B cell (primary cell): ENCODE measurements at regions of chr13 and their contacts with region 1.

Region 1: GRCh38 chr13:41061075-41061913 is at the start of gene WBP4:
- DNase-seq: peak; percentile 97
- ATAC-seq: peak; percentile 70
- H3K4me3 ChIP-seq: peak within 1 kb of the TSS; percentile 83 to 99 (median 98)
- H3K4me3 Mint-ChIP-seq: peak within 1 kb of the TSS; percentile 100
- H3K27ac ChIP-seq: peak within 1 kb of the TSS; percentile 86 to 91
- H3K27ac Mint-ChIP-seq: peak within 1 kb of the TSS; percentile 100
- H3K4me1 ChIP-seq: peaks cover 12 to 14% of the 10 kb centered on the region in 2 donors
- H3K4me1 Mint-ChIP-seq: peaks cover 39% of the 10 kb centered on the region
- H3K27me3 ChIP-seq: no peaks in the 10 kb centered on the region
- H3K27me3 Mint-ChIP-seq: no peaks in the 10 kb centered on the region
- CTCF ChIP-seq: no peak
- total RNA-seq, gene WBP4: 10.4 and 10.6 TPM in 2 replicates

Region 2: DNA sequence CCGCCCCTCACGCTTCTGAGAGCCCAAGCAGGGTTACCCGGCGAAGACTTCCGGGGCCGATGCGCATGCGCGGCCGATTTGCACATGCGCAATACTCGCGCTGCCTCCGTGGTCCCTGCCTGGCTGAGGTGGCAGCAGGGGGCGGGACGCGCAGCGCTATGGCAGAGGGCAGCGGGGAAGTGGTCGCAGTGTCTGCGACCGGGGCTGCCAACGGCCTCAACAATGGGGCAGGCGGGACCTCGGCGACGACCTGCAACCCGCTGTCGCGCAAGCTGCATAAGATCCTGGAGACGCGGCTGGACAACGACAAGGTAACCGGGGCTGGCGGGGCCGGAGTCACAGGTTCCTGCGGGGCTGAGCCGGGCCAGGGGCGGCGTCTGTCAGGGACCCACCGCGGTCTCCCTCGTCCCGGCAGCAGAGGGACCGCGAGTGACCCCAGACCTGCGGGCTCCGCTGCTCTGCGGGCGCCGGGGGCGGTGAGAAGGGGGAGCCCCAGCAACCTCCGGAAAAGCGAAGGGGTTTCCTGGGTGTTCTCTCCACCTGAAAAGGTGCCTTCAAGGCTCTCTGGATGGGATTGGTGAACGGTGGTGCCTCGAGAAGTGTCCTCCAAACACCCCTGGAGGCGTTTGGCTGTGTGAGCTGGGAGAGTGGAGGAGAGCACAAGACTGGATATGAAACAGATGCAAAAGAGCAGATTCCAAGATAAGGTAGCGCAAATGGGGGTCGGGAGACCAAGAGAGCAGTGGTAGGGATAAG is 1405.5 kb before region 1 on chr13 and contains the start of gene COG6:
- CTCF ChIA-PET with region 1: no interaction called
- POLR2A ChIA-PET with region 1: interaction called, 10 read pairs
- intact Hi-C with region 1: no loop called
- DNase-seq: peak; percentile 96
- ATAC-seq: peak; percentile 90
- H3K4me3 ChIP-seq: peak within 1 kb of the TSS; percentile 59 to 93 (median 89)
- H3K4me3 Mint-ChIP-seq: peak within 1 kb of the TSS; percentile 100
- H3K27ac ChIP-seq: peak within 1 kb of the TSS; percentile 35 to 57
- H3K27ac Mint-ChIP-seq: peak within 1 kb of the TSS; percentile 96
- H3K4me1 ChIP-seq: peaks cover 10% of the 10 kb centered on the region in 2 donors
- H3K4me1 Mint-ChIP-seq: peaks cover 32% of the 10 kb centered on the region
- H3K27me3 ChIP-seq: no peaks in the 10 kb centered on the region
- H3K27me3 Mint-ChIP-seq: peaks cover 3% of the 10 kb centered on the region
- CTCF ChIP-seq: no peak
- total RNA-seq, gene COG6: 49.9 and 55.1 TPM in 2 replicates

Region 3: GRCh38 chr13:40933508-40934204 is 127.6 kb before region 1 on chr13:
- CTCF ChIA-PET with region 1: no interaction called
- POLR2A ChIA-PET with region 1: no interaction called
- intact Hi-C with region 1: no loop called
- DNase-seq: peak; percentile 75
- ATAC-seq: peak; percentile 92
- H3K4me3 ChIP-seq: peak overlapping the region in 1 of 5 experiments; percentile 4
- H3K4me3 Mint-ChIP-seq: peak overlapping the region; percentile 48
- H3K27ac ChIP-seq: peak overlapping the region; percentile 43 to 79
- H3K27ac Mint-ChIP-seq: peak overlapping the region; percentile 74
- H3K4me1 ChIP-seq: peaks cover 22 to 23% of the 10 kb centered on the region in 2 donors
- H3K4me1 Mint-ChIP-seq: peaks cover 43% of the 10 kb centered on the region
- H3K27me3 ChIP-seq: no peaks in the 10 kb centered on the region
- H3K27me3 Mint-ChIP-seq: no peaks in the 10 kb centered on the region
- CTCF ChIP-seq: no peak

Region 4: DNA sequence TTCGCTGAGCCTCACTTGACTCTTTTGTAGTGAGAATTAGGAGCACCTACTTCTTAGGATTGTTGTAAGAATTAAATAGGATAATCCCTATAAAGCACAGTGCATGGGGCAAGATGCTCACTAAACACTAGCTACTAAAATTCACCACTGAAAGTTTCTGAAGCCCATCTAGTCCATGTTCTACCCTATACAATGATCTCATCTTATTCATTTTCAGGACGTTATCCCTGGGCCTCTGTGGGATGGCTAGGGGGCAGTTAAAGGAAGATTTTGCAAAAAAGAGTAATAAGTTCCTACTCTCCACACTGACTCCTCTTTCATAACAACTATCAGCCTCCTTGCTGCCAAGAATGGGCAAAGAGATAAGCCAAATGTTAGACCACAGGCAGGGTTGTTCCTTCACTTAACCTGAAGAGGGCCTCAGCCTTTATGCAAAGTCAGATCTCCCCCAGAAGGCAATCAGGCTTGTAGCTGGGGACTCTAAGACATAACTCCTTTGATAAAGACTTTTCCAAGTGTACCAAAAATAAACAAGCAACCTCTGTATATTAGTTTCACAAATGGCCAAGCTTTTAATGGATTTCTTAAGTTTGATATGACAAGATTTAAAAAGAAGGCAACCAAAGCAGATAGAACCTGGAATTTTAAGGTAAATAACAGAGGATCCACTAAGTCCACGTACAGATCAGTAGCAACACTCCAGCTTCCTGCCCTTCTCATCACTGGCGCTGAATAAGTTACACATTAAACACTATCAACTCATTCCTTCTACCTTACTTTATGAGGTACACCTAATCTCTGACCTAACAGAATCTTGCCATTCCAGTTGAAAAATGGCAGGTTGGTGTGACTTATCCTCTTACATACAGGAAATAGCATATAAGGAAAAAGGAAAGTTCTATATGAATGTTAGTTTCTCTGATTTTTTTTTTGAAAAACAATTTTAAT is 86.6 kb before region 1 on chr13:
- CTCF ChIA-PET with region 1: interaction called, 44 read pairs
- POLR2A ChIA-PET with region 1: interaction called, 5 read pairs
- intact Hi-C with region 1: loop called (anchors 2 kb)
- DNase-seq: peak; percentile 71
- ATAC-seq: peak; percentile 87
- H3K4me3 ChIP-seq: peak overlapping the region in 1 of 5 experiments; percentile 30
- H3K4me3 Mint-ChIP-seq: peak overlapping the region; percentile 51
- H3K27ac ChIP-seq: peak overlapping the region in 1 of 2 donors; percentile 54
- H3K27ac Mint-ChIP-seq: peak overlapping the region; percentile 57
- H3K4me1 ChIP-seq: peaks cover 70 to 92% of the 10 kb centered on the region in 2 donors
- H3K4me1 Mint-ChIP-seq: peaks cover 90% of the 10 kb centered on the region
- H3K27me3 ChIP-seq: no peaks in the 10 kb centered on the region
- H3K27me3 Mint-ChIP-seq: no peaks in the 10 kb centered on the region
- CTCF ChIP-seq: peak; percentile 72

Region 5: GRCh38 chr13:41075034-41075433 is 13.7 kb after region 1 on chr13:
- CTCF ChIA-PET with region 1: interaction called, 11 read pairs
- POLR2A ChIA-PET with region 1: interaction called, 3 read pairs
- intact Hi-C with region 1: loop called (anchors 1 kb)
- DNase-seq: peak; percentile 71
- ATAC-seq: peak; percentile 43
- H3K4me3 ChIP-seq: no peak overlapping the region
- H3K4me3 Mint-ChIP-seq: no peak overlapping the region
- H3K27ac ChIP-seq: no peak overlapping the region
- H3K27ac Mint-ChIP-seq: no peak overlapping the region
- H3K4me1 ChIP-seq: no peaks in the 10 kb centered on the region
- H3K4me1 Mint-ChIP-seq: peaks cover 5% of the 10 kb centered on the region
- H3K27me3 ChIP-seq: no peaks in the 10 kb centered on the region
- H3K27me3 Mint-ChIP-seq: no peaks in the 10 kb centered on the region
- CTCF ChIP-seq: peak; percentile 79

Region 6: DNA sequence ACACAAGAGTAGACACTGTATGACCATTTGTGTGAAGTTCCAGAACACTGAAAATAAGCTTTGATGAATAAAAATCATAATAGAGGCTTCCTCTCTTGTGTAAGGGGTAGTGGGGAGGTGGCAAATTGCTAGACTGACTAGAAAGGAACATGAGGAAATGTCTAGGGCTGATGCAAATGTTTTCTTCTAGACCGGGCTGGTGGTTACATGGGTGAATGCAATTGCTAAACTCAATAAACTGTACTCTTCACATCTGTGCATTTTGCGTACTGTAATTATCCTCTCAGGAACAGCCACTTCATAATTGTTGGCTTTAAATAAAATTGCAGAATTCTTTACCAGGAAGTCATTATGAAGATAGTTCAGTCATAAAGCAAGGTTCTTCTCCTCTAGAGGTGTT is 138.2 kb after region 1 on chr13:
- CTCF ChIA-PET with region 1: interaction called, 4 read pairs
- POLR2A ChIA-PET with region 1: interaction called, 11 read pairs
- intact Hi-C with region 1: loop called (anchors 1 kb)
- DNase-seq: peak; percentile 88
- ATAC-seq: peak; percentile 89
- H3K4me3 ChIP-seq: peak overlapping the region in 2 of 5 experiments; percentile 5 to 47
- H3K4me3 Mint-ChIP-seq: peak overlapping the region; percentile 51
- H3K27ac ChIP-seq: peak overlapping the region; percentile 71 to 100
- H3K27ac Mint-ChIP-seq: peak overlapping the region; percentile 98
- H3K4me1 ChIP-seq: peaks cover 35% of the 10 kb centered on the region in 2 donors
- H3K4me1 Mint-ChIP-seq: peaks cover 42% of the 10 kb centered on the region
- H3K27me3 ChIP-seq: no peaks in the 10 kb centered on the region
- H3K27me3 Mint-ChIP-seq: no peaks in the 10 kb centered on the region
- CTCF ChIP-seq: no peak

Region 7: DNA sequence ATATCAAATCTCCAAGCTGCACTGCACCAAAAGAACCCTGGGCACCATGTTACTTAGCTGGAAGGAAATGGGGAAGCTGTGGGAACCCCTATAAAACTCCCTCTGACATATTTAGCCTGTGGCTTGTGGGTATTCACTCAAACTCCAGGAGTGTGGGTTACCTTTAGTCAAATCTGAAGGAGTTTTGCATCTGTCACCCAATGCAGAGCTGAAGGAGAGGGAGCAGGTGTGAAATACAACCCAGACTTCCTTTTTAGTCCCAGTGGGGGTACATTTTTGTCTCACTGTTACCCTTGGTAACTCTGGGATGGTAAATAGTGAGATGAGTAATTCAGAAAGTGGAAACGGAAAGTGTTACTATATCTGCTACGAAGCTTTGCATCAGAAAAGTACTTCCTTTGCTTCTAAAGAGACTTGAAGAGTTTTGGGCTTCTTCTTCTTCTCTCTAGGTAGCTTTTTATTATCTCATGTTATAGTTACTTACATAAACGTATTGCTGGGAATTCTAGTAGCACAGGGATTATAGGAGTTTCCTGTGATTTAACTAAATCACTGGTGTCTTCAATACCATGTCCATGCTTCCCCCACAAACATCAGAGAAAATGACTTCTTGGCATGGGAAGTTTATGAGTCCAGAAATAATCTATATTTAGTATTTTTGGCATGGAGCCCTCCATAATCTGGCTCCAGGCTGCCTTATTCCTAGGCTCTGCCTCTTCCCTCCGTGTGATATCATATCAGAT is 1316.5 kb after region 1 on chr13:
- CTCF ChIA-PET with region 1: no interaction called
- POLR2A ChIA-PET with region 1: no interaction called
- intact Hi-C with region 1: loop called (anchors 2 kb)
- DNase-seq: peak; percentile 95
- ATAC-seq: peak; percentile 83
- H3K4me3 ChIP-seq: peak overlapping the region in 1 of 5 experiments; percentile 35
- H3K4me3 Mint-ChIP-seq: peak overlapping the region; percentile 78
- H3K27ac ChIP-seq: peak overlapping the region; percentile 76 to 79
- H3K27ac Mint-ChIP-seq: peak overlapping the region; percentile 88
- H3K4me1 ChIP-seq: peaks cover 43 to 48% of the 10 kb centered on the region in 2 donors
- H3K4me1 Mint-ChIP-seq: peaks cover 52% of the 10 kb centered on the region
- H3K27me3 ChIP-seq: no peaks in the 10 kb centered on the region
- H3K27me3 Mint-ChIP-seq: no peaks in the 10 kb centered on the region
- CTCF ChIP-seq: no peak